ENCODE measurements at regions of chr5 and their contacts with region 1.

Region 1: DNA sequence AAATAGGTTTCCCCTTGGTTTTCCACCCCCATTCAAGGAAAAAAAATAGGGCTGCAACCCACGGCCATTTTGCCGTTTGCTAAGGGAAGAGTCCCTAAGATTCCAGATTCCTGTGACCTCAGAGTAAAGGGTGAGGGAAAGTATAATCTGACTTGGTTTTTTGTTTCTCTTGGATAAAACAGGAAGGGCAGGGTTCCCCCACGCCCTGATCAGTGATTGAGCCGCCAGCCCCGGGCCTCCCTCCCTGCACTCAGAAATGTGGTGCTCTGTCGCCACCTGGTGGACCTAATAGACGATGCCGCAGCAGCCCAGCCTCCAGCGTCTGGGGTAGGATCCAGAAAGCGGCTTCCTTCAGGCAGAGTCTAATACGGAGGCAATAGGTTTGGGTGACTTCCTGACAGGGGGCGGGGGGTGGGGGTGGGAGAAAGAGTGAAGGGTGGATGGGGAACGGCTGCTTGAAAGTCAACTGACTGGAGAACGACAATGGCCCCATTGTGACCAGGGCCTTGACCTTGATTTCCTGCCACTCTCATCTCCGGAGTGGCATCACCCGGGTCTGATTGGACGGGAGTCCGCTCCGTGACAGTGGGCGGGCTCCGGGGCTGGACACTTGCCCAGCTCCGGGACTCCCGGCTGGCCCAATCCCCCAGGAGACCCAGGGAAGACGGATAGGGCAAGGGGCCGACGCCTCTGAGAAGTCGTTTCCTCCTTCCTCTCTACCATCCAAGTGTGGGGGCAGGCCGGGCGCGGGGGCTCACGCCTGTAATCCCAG is 17.8 kb upstream of the CYSTM1 start:
- DNase-seq: peak; percentile 97

Region 2: DNA sequence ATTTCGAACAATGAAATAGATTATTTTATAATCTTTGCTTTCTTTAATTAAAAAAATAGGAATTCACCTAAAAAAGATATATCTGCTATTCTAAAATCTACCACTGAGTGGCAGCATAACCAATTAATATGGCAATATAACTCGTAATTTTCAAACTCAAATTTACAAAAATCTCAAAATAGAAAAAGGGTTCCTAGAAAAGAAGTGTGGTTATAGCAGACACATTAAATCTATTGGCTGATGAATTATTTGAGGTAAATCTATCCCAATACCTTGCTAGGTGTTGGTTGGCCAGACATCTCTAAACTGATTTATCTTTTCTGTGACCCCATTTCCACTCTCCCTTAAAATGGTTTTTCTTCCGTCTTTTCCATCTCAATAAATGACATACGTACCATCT is 83.9 kb before region 1 on chr5:
- intact Hi-C with region 1: loop called (anchors 5 kb)
- DNase-seq: no peak

Measured in posterior vena cava (tissue), 2 donors.